Activated T-helper 1 cell treated with anti-CD3 and anti-CD28 coated beads, Interleukin-12 subunit alpha, Interleukin-12 subunit beta, Interleukin-2, Interleukin-4 antibody, amounts not matched to agents 30 ng/mL and 10 ng/mL and 1 ng/mL, durations not matched to agents 14 hours and 24 hours and 36 hours (primary cell): ENCODE measurements at regions of chrX and their contacts with region 1.

Region 1: GRCh38 chrX:134186362-134187121 is 50.4 kb upstream of the CCDC160 start:
- DNase-seq: peak; percentile 73
- H3K4me3 Mint-ChIP-seq: peak overlapping the region; percentile 88
- H3K27ac Mint-ChIP-seq: peak overlapping the region; percentile 82
- H3K4me1 Mint-ChIP-seq: peaks cover 31% of the 10 kb centered on the region
- H3K27me3 Mint-ChIP-seq: peaks cover 4% of the 10 kb centered on the region

Region 2: DNA sequence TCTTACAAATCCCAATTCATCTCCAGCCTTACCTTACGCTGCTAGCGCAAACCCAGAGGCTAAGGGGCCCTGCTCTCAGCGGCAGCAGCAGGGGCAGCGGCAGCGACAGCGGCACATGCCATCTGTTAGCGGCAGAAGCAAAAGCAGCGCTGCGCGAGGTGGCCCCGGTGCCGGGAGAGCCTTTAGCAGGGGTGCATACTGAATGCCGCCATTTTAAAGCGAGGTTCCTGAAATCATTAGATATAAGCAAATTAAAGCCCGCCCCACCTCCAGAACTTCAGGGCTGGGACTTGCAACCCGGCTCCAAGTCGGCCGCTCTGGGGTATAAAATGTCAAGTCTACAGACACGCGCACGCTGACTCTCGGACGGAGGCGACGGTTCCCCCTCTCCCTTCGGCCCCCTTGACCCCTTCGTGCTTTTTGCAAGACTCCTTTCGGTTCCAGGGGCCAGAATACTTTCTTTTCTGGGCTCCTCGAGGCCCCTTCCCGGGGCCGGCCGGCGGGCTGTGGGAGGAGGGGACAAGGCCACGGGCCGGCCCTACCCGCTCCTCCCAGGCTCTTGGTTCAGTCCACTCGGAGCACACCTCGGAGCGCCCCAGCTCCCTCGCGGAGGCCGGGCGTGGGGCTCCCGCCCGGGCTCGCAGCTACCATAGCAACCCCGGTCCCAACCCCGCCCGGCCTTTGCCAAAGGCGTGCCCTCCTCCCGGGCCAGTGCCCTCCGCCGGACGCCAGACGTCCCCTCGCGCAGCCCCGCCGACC is 1697.5 kb before region 1 on chrX and contains the start of gene MBNL3:
- intact Hi-C with region 1: loop called (anchors 5 kb)
- DNase-seq: peak; percentile 45
- H3K4me3 Mint-ChIP-seq: peak within 1 kb of the TSS; percentile 95
- H3K27ac Mint-ChIP-seq: peak within 1 kb of the TSS; percentile 94
- H3K4me1 Mint-ChIP-seq: peaks cover 28% of the 10 kb centered on the region
- H3K27me3 Mint-ChIP-seq: peaks cover 7% of the 10 kb centered on the region
- total RNA-seq, gene MBNL3: 8.9 and 12.3 TPM in 2 replicates

Region 3: GRCh38 chrX:133859860-133860259 is 326.7 kb before region 1 on chrX:
- intact Hi-C with region 1: no loop called
- DNase-seq: no peak
- H3K4me3 Mint-ChIP-seq: no peak overlapping the region
- H3K27ac Mint-ChIP-seq: no peak overlapping the region
- H3K4me1 Mint-ChIP-seq: no peaks in the 10 kb centered on the region
- H3K27me3 Mint-ChIP-seq: peaks cover 7% of the 10 kb centered on the region

Region 4: DNA sequence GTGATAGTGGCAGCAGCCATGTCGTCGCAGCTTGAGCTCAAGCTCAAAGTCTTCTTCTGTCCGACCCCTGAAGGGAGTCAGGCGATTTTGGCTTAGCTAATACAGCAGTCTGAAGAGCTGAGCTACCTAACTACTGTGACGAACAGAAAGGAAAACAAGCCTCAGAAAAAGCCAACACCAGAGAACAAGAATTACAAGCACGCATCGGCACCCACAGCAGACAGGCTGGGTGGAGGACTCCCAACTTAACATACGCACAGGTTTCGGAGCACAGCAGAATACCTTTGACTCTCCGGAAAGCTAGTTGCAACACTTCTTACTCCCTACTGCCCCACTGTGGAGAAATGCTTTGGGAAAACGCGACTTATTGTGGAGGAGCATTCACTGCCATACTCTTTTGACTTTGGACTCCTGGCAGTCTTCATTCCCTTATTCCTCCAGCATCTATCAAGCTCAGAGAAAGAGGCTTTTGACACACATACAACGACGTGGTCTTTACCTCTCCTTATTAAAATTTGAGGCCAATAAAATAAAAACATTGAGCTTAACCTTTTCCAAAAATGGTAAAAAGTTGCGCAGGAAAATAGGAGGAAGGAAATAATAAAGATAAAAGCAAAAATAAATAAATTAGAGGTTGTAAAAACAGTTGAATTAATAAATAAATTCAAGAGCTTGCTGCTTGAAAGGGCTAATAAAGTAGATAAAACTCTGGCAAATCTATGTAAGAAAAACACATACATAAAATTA is 159.8 kb before region 1 on chrX:
- intact Hi-C with region 1: loop called (anchors 10 kb)
- DNase-seq: peak; percentile 1
- H3K4me3 Mint-ChIP-seq: no peak overlapping the region
- H3K27ac Mint-ChIP-seq: no peak overlapping the region
- H3K4me1 Mint-ChIP-seq: peaks cover 10% of the 10 kb centered on the region
- H3K27me3 Mint-ChIP-seq: peaks cover 3% of the 10 kb centered on the region

Region 5: DNA sequence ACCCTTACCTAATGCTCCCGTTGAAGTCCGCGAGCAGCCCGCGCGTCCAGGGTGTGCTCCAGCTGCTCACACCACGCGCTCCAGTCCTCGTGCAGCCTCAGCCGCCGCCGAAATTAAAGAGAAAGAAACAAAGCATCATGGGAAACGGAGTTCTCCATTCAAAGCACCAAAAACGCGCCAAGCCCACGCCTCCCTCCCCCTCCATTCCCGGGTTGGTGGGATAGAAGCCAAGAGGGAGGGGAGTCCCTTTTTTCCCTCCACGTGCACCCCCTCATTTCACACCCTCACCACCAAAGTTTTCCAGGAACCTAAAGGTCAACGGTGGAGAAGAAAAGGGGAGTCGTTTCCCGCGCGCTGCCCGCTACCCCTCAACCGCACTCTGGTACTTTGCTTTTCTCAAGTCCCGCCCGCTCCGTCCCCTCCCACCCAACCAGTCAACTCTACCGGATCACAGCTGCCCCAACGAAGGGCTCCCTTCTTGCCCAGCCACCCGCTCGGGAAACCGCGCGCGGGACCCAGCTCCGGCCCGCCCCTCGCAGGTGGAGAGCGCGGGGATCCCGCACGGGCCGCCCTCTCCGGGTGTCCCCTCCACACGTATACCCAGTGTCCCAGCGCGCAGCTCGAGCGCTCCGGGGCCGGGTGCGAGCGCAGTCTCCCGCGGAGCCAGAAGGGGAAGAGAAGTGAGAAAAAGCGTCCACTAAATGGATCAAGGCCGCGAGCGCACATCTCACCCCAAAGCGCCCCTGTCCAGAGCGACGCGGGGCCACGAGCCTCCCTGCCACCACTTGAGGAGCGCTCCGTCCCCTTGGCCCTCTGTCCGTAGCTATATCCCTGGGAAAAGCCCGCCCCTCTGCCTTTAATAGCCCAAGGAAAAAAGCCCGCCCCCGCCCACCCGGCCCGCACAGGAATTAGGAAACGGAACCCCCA is 14.6 kb before region 1 on chrX:
- intact Hi-C with region 1: loop called (anchors 1 kb)
- DNase-seq: peak; percentile 39
- H3K4me3 Mint-ChIP-seq: peak overlapping the region; percentile 96
- H3K27ac Mint-ChIP-seq: peak overlapping the region; percentile 97
- H3K4me1 Mint-ChIP-seq: peaks cover 24% of the 10 kb centered on the region
- H3K27me3 Mint-ChIP-seq: no peaks in the 10 kb centered on the region

Region 6: DNA sequence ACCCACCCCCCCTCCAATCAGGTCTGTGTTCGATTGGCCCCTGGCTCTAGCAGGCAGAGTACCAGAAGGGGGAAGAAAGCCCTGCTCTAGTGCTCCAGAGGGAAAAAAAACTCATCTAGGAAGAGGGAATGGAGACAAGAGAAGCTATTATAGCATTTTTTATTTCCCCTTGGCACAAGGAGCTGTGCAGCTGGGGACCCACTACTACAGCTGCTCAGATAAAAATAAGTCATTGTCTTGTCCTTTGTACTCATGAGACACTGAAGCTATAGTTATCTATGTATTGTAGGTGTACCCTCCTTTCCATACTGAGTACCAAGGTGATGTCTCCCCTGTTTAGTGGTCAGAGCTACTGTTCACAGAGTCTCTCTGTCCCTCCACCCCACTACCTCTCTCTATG is 64.7 kb after region 1 on chrX:
- intact Hi-C with region 1: loop called (anchors 2 kb)
- DNase-seq: no peak
- H3K4me3 Mint-ChIP-seq: no peak overlapping the region
- H3K27ac Mint-ChIP-seq: no peak overlapping the region
- H3K4me1 Mint-ChIP-seq: peaks cover 5% of the 10 kb centered on the region
- H3K27me3 Mint-ChIP-seq: no peaks in the 10 kb centered on the region